Dorsolateral prefrontal cortex (tissue), 120 donors: ENCODE measurements at regions of chr7 and their contacts with region 1.

Region 1: GRCh38 chr7:13442226-13442625 is 547.2 kb downstream of the ETV1 start:
- DNase-seq: no peak
- H3K4me3 ChIP-seq: no peak overlapping the region
- H3K27ac ChIP-seq: no peak overlapping the region
- H3K27me3 ChIP-seq: no peaks in the 10 kb centered on the region
- CTCF ChIP-seq: no peak

Region 2: GRCh38 chr7:14888962-14889361 is 1446.7 kb after region 1 on chr7:
- intact Hi-C with region 1: loop called in 1 of 2 experiments (anchors 5 kb)
- DNase-seq: no peak
- H3K4me3 ChIP-seq: no peak overlapping the region
- H3K27ac ChIP-seq: peak overlapping the region in 2 of 59 donors; percentile 16 to 22
- H3K27me3 ChIP-seq: no peaks in the 10 kb centered on the region
- CTCF ChIP-seq: no peak